SK-N-SH (cell line): ENCODE measurements at regions of chr3 and their contacts with region 1.

Region 1: GRCh38 chr3:46935168-46935858 is 41.2 kb downstream of the CCDC12 start:
- DNase-seq: peak; percentile 64
- H3K4me3 ChIP-seq: no peak overlapping the region
- H3K27ac ChIP-seq: peak overlapping the region; percentile 89 to 91
- H3K4me1 ChIP-seq: peaks cover 53 to 54% of the 10 kb centered on the region in 2 experiments
- H3K27me3 ChIP-seq: no peaks in the 10 kb centered on the region
- CTCF ChIP-seq: peak; percentile 82
- EP300 ChIP-seq: peak; percentile 50 to 75; a peak in 2 of 4 replicates
- RAD21 ChIP-seq: peak; percentile 39; the same call in 1 of the 2 replicates

Region 2: DNA sequence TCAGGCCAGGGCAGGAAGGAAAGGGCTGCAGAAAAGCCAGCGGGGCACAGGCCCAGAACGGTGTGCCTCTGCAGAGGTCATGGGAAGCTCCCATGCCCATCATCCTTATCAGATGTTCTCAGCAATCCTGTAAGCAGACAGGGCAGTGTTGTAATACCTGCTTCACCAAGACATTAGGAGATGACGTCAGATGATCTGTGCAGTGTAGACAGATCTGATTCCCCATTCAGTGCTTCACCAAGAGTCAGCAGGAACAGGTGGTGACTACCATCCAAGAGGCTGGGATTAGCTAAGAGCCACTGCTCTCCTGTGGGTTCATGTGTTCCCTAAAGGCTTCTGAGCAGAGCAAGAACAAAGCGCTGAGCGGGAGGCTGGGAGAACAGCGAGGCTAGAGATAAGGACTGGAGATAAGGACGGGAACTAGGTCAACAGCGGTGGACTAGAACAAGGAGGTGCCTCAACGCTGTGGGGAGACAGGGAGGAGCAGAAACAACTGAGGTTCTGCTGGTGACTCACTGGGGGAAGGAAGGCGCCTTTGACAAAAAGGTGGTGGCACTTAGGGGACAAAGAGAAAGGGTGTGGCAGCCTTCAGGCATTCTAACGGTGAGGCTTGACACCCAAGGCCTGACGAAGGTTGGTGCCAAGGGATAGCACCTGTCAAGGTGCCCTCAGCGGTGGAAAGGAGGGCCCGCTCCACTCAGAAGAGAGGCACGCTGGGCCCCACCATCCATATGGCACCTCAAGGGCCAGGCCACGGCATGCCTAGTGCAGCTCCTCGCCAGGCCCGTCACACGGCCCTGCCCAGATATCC is 12.9 kb after region 1 on chr3:
- CTCF ChIA-PET with region 1: interaction called, 10 read pairs
- POLR2A ChIA-PET with region 1: interaction called, 4 read pairs
- DNase-seq: peak; percentile 53
- H3K4me3 ChIP-seq: no peak overlapping the region
- H3K27ac ChIP-seq: peak overlapping the region; percentile 71 to 87
- H3K4me1 ChIP-seq: peaks cover 25 to 47% of the 10 kb centered on the region in 2 experiments
- H3K27me3 ChIP-seq: no peaks in the 10 kb centered on the region
- CTCF ChIP-seq: no peak
- EP300 ChIP-seq: no peak
- RAD21 ChIP-seq: no peak

Region 3: GRCh38 chr3:46998121-46998851 is 63.0 kb after region 1 on chr3:
- CTCF ChIA-PET with region 1: interaction called, 15 read pairs
- POLR2A ChIA-PET with region 1: no interaction called
- DNase-seq: peak; percentile 90
- H3K4me3 ChIP-seq: peak overlapping the region in 1 of 2 experiments; percentile 32; a peak in 1 of 4 replicates
- H3K27ac ChIP-seq: no peak overlapping the region
- H3K4me1 ChIP-seq: peaks cover 0 to 2% of the 10 kb centered on the region in 2 experiments; a peak in 1 of 4 replicates
- H3K27me3 ChIP-seq: no peaks in the 10 kb centered on the region
- CTCF ChIP-seq: peak; percentile 72
- EP300 ChIP-seq: no peak
- RAD21 ChIP-seq: peak; percentile 75